Caco-2 (cell line): ENCODE measurements at regions of chr7 and their contacts with region 1.

Region 1: GRCh38 chr7:117312598-117313580 is 10.0 kb downstream of the WNT2 start:
- DNase-seq: no peak
- H3K4me3 ChIP-seq: no peak overlapping the region
- H3K4me3 Mint-ChIP-seq: no peak overlapping the region
- H3K27ac Mint-ChIP-seq: no peak overlapping the region
- H3K4me1 ChIP-seq: no peaks in the 10 kb centered on the region
- H3K4me1 Mint-ChIP-seq: no peaks in the 10 kb centered on the region
- H3K27me3 ChIP-seq: no peaks in the 10 kb centered on the region; the same call in 1 of the 2 replicates
- H3K27me3 Mint-ChIP-seq: peaks cover 16% of the 10 kb centered on the region
- CTCF ChIP-seq: no peak

Region 2: DNA sequence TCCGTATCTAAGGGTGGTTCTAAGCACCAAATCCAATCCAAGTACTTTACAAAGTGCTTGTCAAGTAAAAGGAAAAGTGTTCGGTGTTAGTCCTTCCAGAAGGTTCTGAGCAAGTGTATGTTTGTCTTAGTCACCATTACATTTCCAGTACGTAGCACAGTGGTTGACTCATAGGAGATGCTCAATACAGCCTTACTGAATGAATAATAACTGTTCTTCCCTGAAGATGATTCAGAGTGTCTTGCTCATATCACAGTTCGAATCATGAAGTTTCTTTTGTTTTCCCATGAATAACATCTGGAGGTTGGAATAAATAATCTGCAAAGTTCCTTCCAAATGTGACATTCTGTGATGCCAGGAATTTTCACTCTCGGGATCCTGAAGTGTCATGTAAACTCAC is 43.5 kb before region 1 on chr7:
- CTCF ChIA-PET with region 1: no interaction called
- POLR2A ChIA-PET with region 1: no interaction called
- intact Hi-C with region 1: no loop called
- DNase-seq: no peak
- H3K4me3 ChIP-seq: no peak overlapping the region
- H3K4me3 Mint-ChIP-seq: no peak overlapping the region
- H3K27ac Mint-ChIP-seq: no peak overlapping the region
- H3K4me1 ChIP-seq: no peaks in the 10 kb centered on the region
- H3K4me1 Mint-ChIP-seq: no peaks in the 10 kb centered on the region
- H3K27me3 ChIP-seq: peaks cover 1% of the 10 kb centered on the region; the same call in 1 of the 2 replicates
- H3K27me3 Mint-ChIP-seq: peaks cover 21% of the 10 kb centered on the region
- CTCF ChIP-seq: no peak

Region 3: GRCh38 chr7:117385340-117386109 is 72.6 kb after region 1 on chr7:
- CTCF ChIA-PET with region 1: no interaction called
- POLR2A ChIA-PET with region 1: no interaction called
- intact Hi-C with region 1: loop called (anchors 5 kb)
- DNase-seq: no peak
- H3K4me3 ChIP-seq: no peak overlapping the region
- H3K4me3 Mint-ChIP-seq: no peak overlapping the region
- H3K27ac Mint-ChIP-seq: no peak overlapping the region
- H3K4me1 ChIP-seq: no peaks in the 10 kb centered on the region
- H3K4me1 Mint-ChIP-seq: no peaks in the 10 kb centered on the region
- H3K27me3 ChIP-seq: no peaks in the 10 kb centered on the region
- H3K27me3 Mint-ChIP-seq: no peaks in the 10 kb centered on the region
- CTCF ChIP-seq: peak; percentile 29 to 45